ENCODE measurements at regions of chr5 and their contacts with region 1.

Region 1: DNA sequence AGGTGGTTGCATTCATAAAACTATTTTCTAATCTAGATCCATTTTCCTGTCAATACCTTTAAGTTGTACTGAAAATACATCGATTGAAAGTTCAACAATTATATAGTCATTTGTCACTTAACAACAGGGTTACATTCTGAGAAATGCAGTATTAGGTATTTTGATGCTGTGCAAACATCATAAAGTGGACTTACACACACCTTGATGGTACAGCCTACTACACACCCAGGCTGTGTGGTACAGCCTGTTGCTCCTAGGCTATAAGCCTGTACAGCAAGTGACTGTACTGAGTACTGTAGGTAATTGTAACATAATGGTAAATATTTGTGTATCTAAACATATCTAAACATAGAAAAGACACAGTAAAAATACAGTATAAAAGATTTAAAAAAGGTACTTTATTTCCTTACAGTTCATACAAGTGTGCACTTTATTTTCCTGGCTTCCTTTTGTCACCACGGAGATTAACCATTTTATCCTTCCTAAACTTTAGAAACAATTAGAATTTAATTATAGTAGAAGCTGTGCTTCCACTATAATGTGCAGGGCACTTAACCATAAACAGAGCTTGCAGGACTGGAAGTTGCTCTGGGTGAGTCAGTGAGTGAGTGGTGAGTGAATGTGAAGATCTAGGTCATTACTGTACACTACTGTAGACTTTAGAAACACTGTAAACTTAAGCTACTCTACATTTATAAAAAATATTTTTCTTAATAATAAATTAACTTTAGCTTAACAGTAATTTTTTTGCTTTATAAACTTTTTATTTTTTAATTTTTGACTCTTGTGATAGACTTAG is 42.9 kb upstream of the MEF2C start:
- DNase-seq: no peak
- ATAC-seq: no peak; the same call in 2 of the 3 replicates
- H3K4me3 ChIP-seq: no peak overlapping the region
- H3K27ac ChIP-seq: no peak overlapping the region
- H3K4me1 ChIP-seq: no peaks in the 10 kb centered on the region
- H3K27me3 ChIP-seq: no peaks in the 10 kb centered on the region
- CTCF ChIP-seq: no peak
- EP300 ChIP-seq: no peak
- POLR2A ChIP-seq: no peak
- RAD21 ChIP-seq: no peak

Region 2: GRCh38 chr5:88948746-88949600 is 23.1 kb after region 1 on chr5:
- CTCF ChIA-PET with region 1: no interaction called
- POLR2A ChIA-PET with region 1: no interaction called
- RAD21 ChIA-PET with region 1: no interaction called
- SMC1A ChIA-PET with region 1: interaction called, 14 read pairs
- in situ Hi-C with region 1: no loop called
- intact Hi-C with region 1: no loop called
- DNase-seq: no peak
- ATAC-seq: no peak
- H3K4me3 ChIP-seq: no peak overlapping the region
- H3K27ac ChIP-seq: no peak overlapping the region
- H3K4me1 ChIP-seq: peaks cover 14% of the 10 kb centered on the region
- H3K27me3 ChIP-seq: no peaks in the 10 kb centered on the region
- CTCF ChIP-seq: no peak
- EP300 ChIP-seq: no peak
- POLR2A ChIP-seq: no peak
- RAD21 ChIP-seq: no peak

Measured in GM12878 (cell line).